T-cell (primary cell): ENCODE measurements at regions of chr2 and their contacts with region 1.

Region 1: DNA sequence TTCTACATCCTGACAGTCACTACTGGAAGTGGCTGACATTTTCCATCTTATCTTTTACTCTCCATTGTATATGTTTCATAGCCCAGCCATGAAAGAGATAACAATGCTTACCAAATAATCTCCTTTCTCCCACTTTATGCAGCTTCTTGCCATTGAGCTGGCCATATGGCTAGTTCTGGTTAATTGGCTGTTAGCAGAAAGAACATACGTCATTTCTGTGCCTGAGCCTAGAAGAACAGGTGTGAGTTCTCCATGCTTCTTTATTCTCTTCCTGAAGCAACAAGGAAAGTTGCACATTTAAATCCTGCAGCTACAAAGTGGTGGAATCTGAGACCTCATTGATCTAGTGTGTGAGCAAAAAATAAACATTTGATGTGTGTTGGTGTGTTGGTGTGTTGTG is 82.0 kb upstream of the FSHR start:
- DNase-seq: no peak
- ATAC-seq: no peak
- H3K4me3 ChIP-seq: no peak overlapping the region
- H3K4me3 Mint-ChIP-seq: no peak overlapping the region
- H3K27ac ChIP-seq: no peak overlapping the region
- H3K27ac Mint-ChIP-seq: no peak overlapping the region
- H3K4me1 ChIP-seq: no peaks in the 10 kb centered on the region
- H3K4me1 Mint-ChIP-seq: no peaks in the 10 kb centered on the region
- H3K27me3 ChIP-seq: no peaks in the 10 kb centered on the region
- H3K27me3 Mint-ChIP-seq: peaks cover 0 to 5% of the 10 kb centered on the region in 2 donors

Region 2: DNA sequence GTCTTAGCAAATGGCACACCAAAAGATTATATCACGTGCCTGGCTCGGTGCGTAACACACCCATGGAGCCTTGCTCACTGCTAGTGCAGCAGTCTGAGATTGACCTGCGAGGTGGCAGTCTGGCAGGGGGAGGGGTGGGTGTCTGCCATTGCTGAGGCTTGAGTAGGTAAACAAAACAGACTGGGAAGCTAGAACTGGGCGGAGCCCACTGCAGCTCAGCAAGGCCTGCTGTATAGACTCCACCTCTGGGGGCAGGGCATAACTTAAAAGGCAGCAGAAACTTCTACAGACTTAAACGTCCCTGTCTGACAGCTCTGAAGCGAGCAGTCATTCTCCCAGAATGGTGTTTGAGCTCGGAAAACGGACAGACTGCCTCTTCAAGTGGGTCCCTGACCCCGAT is 26.1 kb before region 1 on chr2:
- CTCF ChIA-PET with region 1: no interaction called
- POLR2A ChIA-PET with region 1: no interaction called
- DNase-seq: no peak
- ATAC-seq: no peak
- H3K4me3 ChIP-seq: no peak overlapping the region
- H3K4me3 Mint-ChIP-seq: no peak overlapping the region
- H3K27ac ChIP-seq: no peak overlapping the region
- H3K27ac Mint-ChIP-seq: no peak overlapping the region
- H3K4me1 ChIP-seq: no peaks in the 10 kb centered on the region
- H3K4me1 Mint-ChIP-seq: no peaks in the 10 kb centered on the region
- H3K27me3 ChIP-seq: no peaks in the 10 kb centered on the region
- H3K27me3 Mint-ChIP-seq: peaks cover 0 to under 1% of the 10 kb centered on the region in 2 donors

Region 3: DNA sequence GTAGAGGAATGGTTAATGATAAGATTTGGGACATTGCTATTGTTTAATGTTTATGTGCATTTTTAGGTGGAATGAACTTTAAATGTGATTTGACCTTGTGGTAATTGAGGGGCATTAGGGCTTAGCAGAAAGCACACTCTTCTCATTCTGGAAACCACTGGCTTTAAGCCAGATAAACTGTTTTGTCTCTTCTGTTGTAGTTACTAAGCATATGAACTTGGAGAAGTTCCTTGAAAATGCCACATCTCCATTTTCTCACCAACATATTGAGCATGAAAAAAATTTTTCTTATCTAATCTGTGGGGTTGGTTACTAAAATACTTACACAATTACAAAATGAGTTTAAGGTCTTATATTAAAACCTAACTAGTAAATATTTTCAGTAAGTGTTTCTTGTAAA is 11.2 kb before region 1 on chr2:
- CTCF ChIA-PET with region 1: no interaction called
- POLR2A ChIA-PET with region 1: no interaction called
- DNase-seq: no peak
- ATAC-seq: no peak
- H3K4me3 ChIP-seq: no peak overlapping the region
- H3K4me3 Mint-ChIP-seq: no peak overlapping the region
- H3K27ac ChIP-seq: no peak overlapping the region
- H3K27ac Mint-ChIP-seq: no peak overlapping the region
- H3K4me1 ChIP-seq: no peaks in the 10 kb centered on the region
- H3K4me1 Mint-ChIP-seq: no peaks in the 10 kb centered on the region
- H3K27me3 ChIP-seq: no peaks in the 10 kb centered on the region
- H3K27me3 Mint-ChIP-seq: no peaks in the 10 kb centered on the region

Region 4: GRCh38 chr2:49278561-49278960 is 42.2 kb after region 1 on chr2:
- CTCF ChIA-PET with region 1: no interaction called
- POLR2A ChIA-PET with region 1: no interaction called
- DNase-seq: no peak
- ATAC-seq: no peak
- H3K4me3 ChIP-seq: no peak overlapping the region
- H3K4me3 Mint-ChIP-seq: no peak overlapping the region
- H3K27ac ChIP-seq: no peak overlapping the region
- H3K27ac Mint-ChIP-seq: no peak overlapping the region
- H3K4me1 ChIP-seq: no peaks in the 10 kb centered on the region
- H3K4me1 Mint-ChIP-seq: no peaks in the 10 kb centered on the region
- H3K27me3 ChIP-seq: no peaks in the 10 kb centered on the region
- H3K27me3 Mint-ChIP-seq: no peaks in the 10 kb centered on the region

Region 5: GRCh38 chr2:51149725-51150124 is 1913.4 kb after region 1 on chr2:
- CTCF ChIA-PET with region 1: no interaction called
- POLR2A ChIA-PET with region 1: interaction called in 1 of 2 experiments, 13 read pairs
- DNase-seq: no peak
- ATAC-seq: no peak
- H3K4me3 ChIP-seq: no peak overlapping the region
- H3K4me3 Mint-ChIP-seq: no peak overlapping the region
- H3K27ac ChIP-seq: no peak overlapping the region
- H3K27ac Mint-ChIP-seq: no peak overlapping the region
- H3K4me1 ChIP-seq: no peaks in the 10 kb centered on the region
- H3K4me1 Mint-ChIP-seq: no peaks in the 10 kb centered on the region
- H3K27me3 ChIP-seq: no peaks in the 10 kb centered on the region
- H3K27me3 Mint-ChIP-seq: no peaks in the 10 kb centered on the region